ENCODE measurements at regions of chr15 and their contacts with region 1.

Region 1: GRCh38 chr15:33086507-33087121 is 107.9 kb downstream of the FMN1 start:
- DNase-seq: peak; percentile 63
- H3K4me3 Mint-ChIP-seq: no peak overlapping the region
- H3K27ac Mint-ChIP-seq: no peak overlapping the region
- H3K4me1 Mint-ChIP-seq: no peaks in the 10 kb centered on the region
- H3K27me3 Mint-ChIP-seq: no peaks in the 10 kb centered on the region
- CTCF ChIP-seq: peak; percentile 42

Region 2: DNA sequence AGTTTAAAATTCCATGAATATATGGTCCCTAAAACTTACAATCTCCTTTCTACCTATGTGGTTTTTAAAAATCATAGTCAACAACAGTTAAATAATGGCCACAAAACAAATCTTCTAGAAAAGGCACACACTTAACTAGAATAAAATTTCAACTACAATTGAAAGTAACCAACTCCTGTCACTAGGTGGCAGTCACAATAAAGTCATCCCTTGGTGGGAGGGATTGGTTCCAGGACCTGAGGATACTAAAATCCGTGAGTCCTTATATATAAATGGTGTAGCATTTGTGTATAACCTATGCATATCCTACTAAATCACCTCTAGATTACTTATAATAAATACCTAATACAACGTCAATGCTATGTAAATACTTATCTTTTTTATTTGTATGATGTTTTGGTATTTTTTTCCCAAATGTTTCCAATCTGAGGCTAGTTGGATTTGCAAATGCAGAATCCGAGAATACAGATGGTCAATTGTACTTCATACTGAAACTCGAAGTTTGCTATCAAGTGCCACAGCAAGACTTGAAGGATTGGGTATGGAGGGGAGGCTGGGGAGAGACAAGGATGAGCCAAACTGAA is 64.7 kb before region 1 on chr15:
- CTCF ChIA-PET with region 1: interaction called, 19 read pairs
- POLR2A ChIA-PET with region 1: no interaction called
- intact Hi-C with region 1: loop called (anchors 2 kb)
- DNase-seq: peak; percentile 76
- H3K4me3 Mint-ChIP-seq: no peak overlapping the region
- H3K27ac Mint-ChIP-seq: peak overlapping the region; percentile 85
- H3K4me1 Mint-ChIP-seq: peaks cover 10% of the 10 kb centered on the region
- H3K27me3 Mint-ChIP-seq: no peaks in the 10 kb centered on the region
- CTCF ChIP-seq: peak; percentile 43

Region 3: GRCh38 chr15:33074942-33075341 is 11.7 kb before region 1 on chr15:
- CTCF ChIA-PET with region 1: interaction called, 19 read pairs
- POLR2A ChIA-PET with region 1: no interaction called
- intact Hi-C with region 1: no loop called
- DNase-seq: peak; percentile 34
- H3K4me3 Mint-ChIP-seq: no peak overlapping the region
- H3K27ac Mint-ChIP-seq: no peak overlapping the region
- H3K4me1 Mint-ChIP-seq: no peaks in the 10 kb centered on the region
- H3K27me3 Mint-ChIP-seq: no peaks in the 10 kb centered on the region
- CTCF ChIP-seq: no peak

Region 4: GRCh38 chr15:33098094-33099040 is 11.8 kb after region 1 on chr15:
- CTCF ChIA-PET with region 1: interaction called, 10 read pairs
- POLR2A ChIA-PET with region 1: interaction called, 4 read pairs
- intact Hi-C with region 1: no loop called
- DNase-seq: peak; percentile 3
- H3K4me3 Mint-ChIP-seq: no peak overlapping the region
- H3K27ac Mint-ChIP-seq: no peak overlapping the region
- H3K4me1 Mint-ChIP-seq: no peaks in the 10 kb centered on the region
- H3K27me3 Mint-ChIP-seq: no peaks in the 10 kb centered on the region
- CTCF ChIP-seq: no peak

Region 5: GRCh38 chr15:33104212-33104611 is 17.6 kb after region 1 on chr15:
- CTCF ChIA-PET with region 1: interaction called, 10 read pairs
- POLR2A ChIA-PET with region 1: interaction called, 4 read pairs
- intact Hi-C with region 1: no loop called
- DNase-seq: peak; percentile 43
- H3K4me3 Mint-ChIP-seq: no peak overlapping the region
- H3K27ac Mint-ChIP-seq: peak overlapping the region; percentile 74
- H3K4me1 Mint-ChIP-seq: peaks cover 13% of the 10 kb centered on the region
- H3K27me3 Mint-ChIP-seq: peaks cover 11% of the 10 kb centered on the region
- CTCF ChIP-seq: no peak

Region 6: DNA sequence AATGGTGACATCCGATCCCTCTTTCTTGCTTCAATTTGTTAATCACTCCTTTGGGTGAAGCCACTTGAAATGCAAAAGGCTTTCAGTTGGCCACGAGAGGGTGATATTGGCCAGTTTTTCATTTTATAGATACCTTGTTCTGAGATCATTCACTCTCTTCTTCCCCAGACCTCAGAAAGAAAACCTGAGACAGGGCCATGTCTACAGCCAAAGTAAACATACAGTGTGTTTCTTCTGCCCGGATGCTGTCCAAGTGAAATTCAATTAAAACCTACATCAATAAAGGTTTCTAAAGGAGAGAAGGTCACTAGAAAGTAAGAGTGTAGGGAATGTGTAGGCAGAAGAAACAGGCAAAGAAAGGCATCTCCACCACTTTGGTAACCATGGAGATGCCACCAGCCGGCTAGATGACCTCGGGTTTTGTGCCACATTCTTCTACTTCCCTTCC is 147.4 kb after region 1 on chr15:
- CTCF ChIA-PET with region 1: interaction called, 7 read pairs
- POLR2A ChIA-PET with region 1: no interaction called
- intact Hi-C with region 1: loop called (anchors 5 kb)
- DNase-seq: peak; percentile 73
- H3K4me3 Mint-ChIP-seq: no peak overlapping the region
- H3K27ac Mint-ChIP-seq: no peak overlapping the region
- H3K4me1 Mint-ChIP-seq: no peaks in the 10 kb centered on the region
- H3K27me3 Mint-ChIP-seq: no peaks in the 10 kb centered on the region
- CTCF ChIP-seq: peak; percentile 63